Posterior vena cava (tissue), 2 donors: ENCODE measurements at regions of chr14 and their contacts with region 1.

Region 1: DNA sequence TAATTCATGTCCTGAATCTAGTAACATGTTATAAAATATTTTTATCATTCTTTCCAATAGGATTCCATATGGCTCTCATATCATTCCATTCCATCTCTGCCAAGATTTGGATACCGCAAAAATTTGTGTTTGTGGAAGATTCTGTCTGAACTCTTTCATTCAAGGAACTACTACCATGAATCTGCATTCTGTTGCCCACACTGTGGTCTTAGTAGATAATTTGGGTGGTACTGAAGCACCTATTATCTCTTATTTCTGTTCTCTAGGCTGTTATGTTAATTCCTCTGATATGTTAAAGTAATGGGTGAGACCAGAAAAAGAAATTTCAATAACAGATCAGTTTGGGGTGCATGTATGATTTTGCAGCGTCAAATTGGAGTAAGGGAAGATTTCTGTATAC is 6.2 kb downstream of the RPL36AL start:
- DNase-seq: no peak

Region 2: GRCh38 chr14:48586099-48586498 is 1028.1 kb before region 1 on chr14:
- intact Hi-C with region 1: loop called in 1 of 2 experiments (anchors 5 kb)
- DNase-seq: no peak

Region 3: DNA sequence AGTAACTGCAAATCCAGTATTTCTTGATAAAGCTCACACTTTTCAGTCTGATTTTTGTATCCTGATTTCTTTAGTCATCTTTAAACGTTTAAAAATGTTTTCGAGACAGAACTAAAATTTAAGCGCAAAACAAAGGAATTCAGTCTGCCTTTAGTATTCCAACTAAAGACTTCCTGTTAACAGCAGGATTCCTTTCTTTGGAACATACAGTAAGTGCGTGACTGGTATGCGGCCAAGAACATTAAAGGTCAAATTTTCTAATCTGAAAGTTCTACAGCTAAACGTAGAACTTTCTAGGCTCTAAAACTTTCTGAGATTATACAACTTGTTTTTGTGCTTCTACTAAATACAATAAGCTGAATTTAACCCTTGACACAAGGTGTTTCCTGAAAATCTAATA is 1044.0 kb after region 1 on chr14:
- intact Hi-C with region 1: no loop called
- DNase-seq: no peak